Activated CD4-positive, alpha-beta memory T cell treated with anti-CD3 and anti-CD28 coated beads for 36 hours (primary cell): ENCODE measurements at regions of chr7 and their contacts with region 1.

Region 1: DNA sequence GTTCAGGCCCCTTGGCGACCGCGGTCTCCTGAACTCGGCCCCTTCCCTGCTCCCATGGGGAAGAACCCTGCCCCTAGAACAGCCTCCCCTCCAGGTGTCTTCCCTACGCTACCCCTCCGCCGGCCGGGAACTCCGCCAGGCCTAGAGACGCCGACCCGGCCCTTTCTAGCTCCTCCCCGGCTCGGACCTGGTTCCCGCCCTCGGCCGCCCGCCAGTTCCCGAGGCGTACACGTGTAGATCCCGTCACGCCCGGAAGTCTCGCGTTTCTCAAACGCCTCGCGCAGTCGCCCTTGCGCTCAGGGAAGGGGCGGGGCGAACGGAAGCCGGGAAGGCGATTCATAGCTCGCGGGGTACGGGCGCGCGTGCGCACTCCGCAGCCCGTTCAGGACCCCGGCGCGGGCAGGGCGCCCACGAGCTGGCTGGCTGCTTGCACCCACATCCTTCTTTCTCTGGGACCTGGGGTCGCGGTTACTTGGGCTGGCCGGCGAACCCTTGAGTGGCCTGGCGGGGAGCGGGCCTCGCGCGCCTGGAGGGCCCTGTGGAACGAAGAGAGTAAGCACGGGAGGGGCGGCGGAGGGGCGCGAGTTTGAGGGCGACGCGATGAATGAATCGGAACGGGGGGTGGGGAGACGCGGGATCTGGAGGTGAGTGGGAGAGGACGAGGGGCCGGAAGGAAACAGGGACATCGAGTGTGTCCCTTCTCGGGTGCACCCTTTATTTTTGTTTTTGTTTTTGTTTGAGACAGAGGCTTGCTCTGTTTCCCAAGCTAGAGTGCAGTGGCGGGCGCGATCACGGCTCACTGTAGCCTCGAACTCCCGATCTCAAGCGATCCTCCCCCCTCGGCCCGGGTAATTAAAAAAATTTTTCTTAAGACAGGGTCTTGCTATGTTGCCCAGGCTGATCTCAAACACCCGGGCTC is at the start of gene POP7:
- DNase-seq: peak; percentile 99
- H3K4me3 Mint-ChIP-seq: peak within 1 kb of the TSS; percentile 90
- H3K27ac Mint-ChIP-seq: peak within 1 kb of the TSS; percentile 88
- H3K4me1 Mint-ChIP-seq: peaks cover 14% of the 10 kb centered on the region
- H3K27me3 Mint-ChIP-seq: no peaks in the 10 kb centered on the region
- total RNA-seq, gene POP7: 38.7 to 42.2 TPM

Region 2: GRCh38 chr7:100632951-100633717 is 72.9 kb before region 1 on chr7:
- CTCF ChIA-PET with region 1: interaction called, 10 read pairs
- POLR2A ChIA-PET with region 1: interaction called, 13 read pairs
- intact Hi-C with region 1: no loop called
- DNase-seq: peak; percentile 78
- H3K4me3 Mint-ChIP-seq: peak overlapping the region; percentile 77
- H3K27ac Mint-ChIP-seq: peak overlapping the region; percentile 82
- H3K4me1 Mint-ChIP-seq: peaks cover 12% of the 10 kb centered on the region
- H3K27me3 Mint-ChIP-seq: peaks cover 3% of the 10 kb centered on the region

Region 3: DNA sequence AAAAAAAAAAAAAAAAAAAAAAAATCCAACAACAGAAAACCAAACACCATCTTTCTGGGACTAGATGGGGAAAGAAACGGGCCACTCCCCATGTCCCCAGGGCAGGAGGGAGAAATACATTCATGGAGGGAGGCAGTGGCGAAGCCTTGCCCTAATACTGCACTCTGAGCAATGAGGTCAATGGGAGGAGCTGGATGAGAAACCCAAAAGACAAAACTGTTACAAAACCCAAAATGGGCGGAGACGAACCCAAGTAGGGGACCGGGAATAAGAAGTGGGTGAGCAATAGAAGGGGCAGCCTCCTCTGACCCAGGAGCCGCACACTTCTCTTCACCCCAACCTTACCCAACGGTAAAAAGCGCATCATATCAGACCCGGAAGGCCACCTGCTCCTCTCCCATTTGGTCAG is 25.8 kb before region 1 on chr7:
- CTCF ChIA-PET with region 1: interaction called, 17 read pairs
- POLR2A ChIA-PET with region 1: interaction called, 6 read pairs
- intact Hi-C with region 1: no loop called
- DNase-seq: no peak
- H3K4me3 Mint-ChIP-seq: no peak overlapping the region
- H3K27ac Mint-ChIP-seq: peak overlapping the region; percentile 19
- H3K4me1 Mint-ChIP-seq: peaks cover 24% of the 10 kb centered on the region
- H3K27me3 Mint-ChIP-seq: no peaks in the 10 kb centered on the region

Region 4: GRCh38 chr7:100719523-100720319 is 13.7 kb after region 1 on chr7:
- CTCF ChIA-PET with region 1: interaction called, 68 read pairs
- POLR2A ChIA-PET with region 1: interaction called, 3 read pairs
- intact Hi-C with region 1: loop called (anchors 2 kb)
- DNase-seq: no peak
- H3K4me3 Mint-ChIP-seq: no peak overlapping the region
- H3K27ac Mint-ChIP-seq: no peak overlapping the region
- H3K4me1 Mint-ChIP-seq: peaks cover 2% of the 10 kb centered on the region
- H3K27me3 Mint-ChIP-seq: peaks cover 40% of the 10 kb centered on the region

Region 5: DNA sequence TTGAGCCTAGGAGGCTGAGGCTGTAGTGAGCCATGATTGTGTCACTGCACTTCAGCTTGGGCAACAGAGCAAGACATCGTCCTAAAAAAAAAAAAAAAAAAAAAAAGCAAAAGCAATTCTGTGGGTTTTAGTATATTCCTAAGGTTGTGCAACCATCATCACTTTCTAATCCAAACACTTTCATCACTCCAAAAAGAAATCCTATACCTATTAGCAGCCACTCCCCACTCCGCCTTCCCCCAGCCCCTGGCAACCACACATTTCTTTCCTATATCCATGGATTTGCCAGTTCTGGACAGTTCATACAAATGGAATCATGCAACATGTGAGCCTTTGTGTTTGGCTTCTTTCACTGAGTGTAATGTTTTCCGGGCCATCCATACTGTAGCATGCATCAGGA is 47.7 kb after region 1 on chr7:
- CTCF ChIA-PET with region 1: no interaction called
- POLR2A ChIA-PET with region 1: no interaction called
- intact Hi-C with region 1: no loop called
- DNase-seq: no peak
- H3K4me3 Mint-ChIP-seq: no peak overlapping the region
- H3K27ac Mint-ChIP-seq: no peak overlapping the region
- H3K4me1 Mint-ChIP-seq: no peaks in the 10 kb centered on the region
- H3K27me3 Mint-ChIP-seq: peaks cover 11% of the 10 kb centered on the region

Region 6: GRCh38 chr7:100852048-100852872 is 146.2 kb after region 1 on chr7 and contains the start of gene SLC12A9:
- CTCF ChIA-PET with region 1: interaction called, 92 read pairs
- POLR2A ChIA-PET with region 1: interaction called, 8 read pairs
- intact Hi-C with region 1: loop called (anchors 1 kb)
- DNase-seq: peak; percentile 92
- H3K4me3 Mint-ChIP-seq: peak within 1 kb of the TSS; percentile 92
- H3K27ac Mint-ChIP-seq: peak within 1 kb of the TSS; percentile 81
- H3K4me1 Mint-ChIP-seq: peaks cover 13% of the 10 kb centered on the region
- H3K27me3 Mint-ChIP-seq: no peaks in the 10 kb centered on the region
- total RNA-seq, gene SLC12A9: 17.8 to 18.5 TPM